ENCODE measurements at regions of chr2 and their contacts with region 1.

Region 1: GRCh38 chr2:171703574-171704347 is 16.5 kb downstream of the DYNC1I2 start:
- DNase-seq: peak; percentile 58

Region 2: GRCh38 chr2:171893824-171894611 is 190.3 kb after region 1 on chr2 and contains the start of gene SLC25A12:
- in situ Hi-C with region 1: no loop called
- DNase-seq: peak; percentile 85

Region 3: DNA sequence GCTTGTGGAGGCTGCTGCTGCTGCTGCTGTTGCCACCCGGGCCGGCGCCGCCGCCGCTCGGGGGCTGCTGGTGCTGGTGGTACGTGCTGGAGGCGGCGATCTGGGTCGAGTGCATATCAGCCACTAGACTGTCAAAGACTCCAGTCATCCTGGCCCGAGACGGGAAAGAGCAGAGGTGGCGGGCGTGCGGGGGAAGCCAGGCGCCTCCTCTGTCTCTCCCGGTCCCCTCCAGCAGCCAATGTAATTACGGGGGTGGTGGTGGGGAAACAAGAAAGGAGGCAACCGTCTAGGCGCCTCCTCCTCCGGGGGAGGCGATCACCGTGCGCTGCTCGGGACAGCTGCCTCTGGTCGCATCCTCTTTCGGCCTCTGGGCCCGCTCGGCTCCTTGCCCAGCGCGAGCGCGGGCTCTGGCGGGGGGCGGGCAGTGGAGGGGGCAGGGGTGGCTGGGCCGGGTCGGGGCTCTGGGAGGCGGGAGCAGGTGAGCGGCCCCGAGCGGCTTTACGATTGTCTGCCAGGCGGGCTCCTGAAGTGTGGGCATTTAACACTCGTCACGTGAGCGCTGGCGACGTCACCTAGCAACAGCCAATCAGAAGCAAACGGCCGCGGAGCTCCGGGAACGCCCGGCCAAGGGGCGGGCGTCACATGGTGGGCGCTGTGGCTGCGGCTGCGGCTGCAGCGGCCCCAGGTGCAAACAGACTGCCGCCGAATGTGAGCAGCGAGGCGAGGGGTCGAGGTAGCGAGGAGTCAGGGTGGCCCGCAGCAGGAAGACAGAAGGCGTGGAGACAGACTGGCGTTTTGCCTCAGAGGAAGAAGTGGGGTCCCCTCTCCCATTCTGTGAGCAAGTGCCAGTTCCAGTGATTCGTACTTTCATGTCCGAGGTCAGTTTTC is 398.9 kb after region 1 on chr2 and contains the start of gene DLX2:
- in situ Hi-C with region 1: loop called (anchors 25 kb)
- DNase-seq: peak; percentile 97

Measured in ACHN (cell line).